K562 (cell line): ENCODE measurements at regions of chr22 and their contacts with region 1.

Region 1: DNA sequence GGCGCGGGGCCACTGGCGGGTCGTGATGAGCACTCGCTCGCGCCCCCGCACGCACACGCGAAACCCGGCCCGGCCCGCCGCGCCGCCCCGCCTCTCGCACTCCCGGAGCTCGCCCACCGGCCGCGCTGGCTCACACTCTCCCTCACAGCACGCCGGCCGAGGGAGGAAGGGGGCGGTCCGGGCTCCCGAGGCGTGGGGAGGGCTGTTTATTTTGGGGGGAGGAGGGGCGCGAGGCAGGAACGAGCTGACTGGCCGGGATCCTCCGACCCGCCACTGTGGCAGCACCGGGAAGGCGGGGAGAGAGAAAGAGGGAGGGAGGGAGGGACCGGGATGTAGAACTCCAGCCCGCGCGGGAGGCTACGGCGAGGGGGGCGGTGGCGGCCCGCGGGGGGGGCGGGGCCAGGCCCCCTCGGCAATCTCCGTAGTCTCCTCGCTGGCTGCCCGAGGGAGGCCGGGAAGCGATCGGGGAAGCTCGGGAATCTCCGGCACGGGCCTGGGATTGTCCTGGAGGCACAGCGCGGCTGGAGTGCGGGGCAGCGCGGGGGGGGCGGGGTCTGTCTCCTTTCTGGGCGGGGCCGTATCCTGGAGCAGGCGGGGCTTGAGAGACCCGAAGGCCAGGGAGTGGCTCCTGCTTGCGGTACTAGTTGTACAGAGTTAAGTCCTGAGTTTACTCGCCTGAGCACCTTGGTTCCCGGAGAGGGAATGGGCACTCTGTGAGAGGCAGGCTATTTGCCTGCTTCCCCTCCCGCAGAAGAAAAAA is at the start of gene RBFOX2:
- DNase-seq: peak; percentile 91 to 94 (median 92)
- ATAC-seq: peak; percentile 96
- H3K4me3 ChIP-seq: peak within 1 kb of the TSS; percentile 73
- H3K27ac ChIP-seq: peak within 1 kb of the TSS; percentile 72
- H3K4me1 ChIP-seq: peaks cover 5 to 10% of the 10 kb centered on the region in 2 experiments; a peak in 3 of 5 replicates
- H3K27me3 ChIP-seq: no peaks in the 10 kb centered on the region
- CTCF ChIP-seq: no peak
- EP300 ChIP-seq: no peak
- POLR2A ChIP-seq: peak; percentile 49; the same call in 1 of the 2 replicates
- RAD21 ChIP-seq: no peak
- polyA plus RNA-seq, gene RBFOX2: 5.8 to 8.0 TPM

Region 2: GRCh38 chr22:35930933-35931332 is 97.9 kb before region 1 on chr22:
- CTCF ChIA-PET with region 1: no interaction called
- POLR2A ChIA-PET with region 1: no interaction called
- in situ Hi-C with region 1: no loop called
- intact Hi-C with region 1: loop called (anchors 10 kb)
- DNase-seq: peak; percentile 19 to 64 (median 34)
- ATAC-seq: peak; percentile 93
- H3K4me3 ChIP-seq: no peak overlapping the region
- H3K27ac ChIP-seq: no peak overlapping the region
- H3K4me1 ChIP-seq: peaks cover 0 to 6% of the 10 kb centered on the region in 2 experiments; a peak in 1 of 5 replicates
- H3K27me3 ChIP-seq: no peaks in the 10 kb centered on the region
- CTCF ChIP-seq: peak; percentile 41 to 68 (median 51); a peak in 4 of 6 replicates
- EP300 ChIP-seq: no peak
- POLR2A ChIP-seq: no peak
- RAD21 ChIP-seq: peak; percentile 77 to 88

Region 3: GRCh38 chr22:36117053-36117554 is 88.3 kb after region 1 on chr22:
- CTCF ChIA-PET with region 1: no interaction called
- POLR2A ChIA-PET with region 1: no interaction called
- in situ Hi-C with region 1: no loop called
- intact Hi-C with region 1: no loop called
- DNase-seq: no peak
- ATAC-seq: no peak
- H3K4me3 ChIP-seq: no peak overlapping the region
- H3K27ac ChIP-seq: no peak overlapping the region
- H3K4me1 ChIP-seq: no peaks in the 10 kb centered on the region; a peak in 1 of 5 replicates
- H3K27me3 ChIP-seq: no peaks in the 10 kb centered on the region; a peak in 1 of 5 replicates
- CTCF ChIP-seq: no peak
- EP300 ChIP-seq: no peak
- POLR2A ChIP-seq: no peak
- RAD21 ChIP-seq: no peak